ENCODE measurements at regions of chr7 and their contacts with region 1.

Region 1: DNA sequence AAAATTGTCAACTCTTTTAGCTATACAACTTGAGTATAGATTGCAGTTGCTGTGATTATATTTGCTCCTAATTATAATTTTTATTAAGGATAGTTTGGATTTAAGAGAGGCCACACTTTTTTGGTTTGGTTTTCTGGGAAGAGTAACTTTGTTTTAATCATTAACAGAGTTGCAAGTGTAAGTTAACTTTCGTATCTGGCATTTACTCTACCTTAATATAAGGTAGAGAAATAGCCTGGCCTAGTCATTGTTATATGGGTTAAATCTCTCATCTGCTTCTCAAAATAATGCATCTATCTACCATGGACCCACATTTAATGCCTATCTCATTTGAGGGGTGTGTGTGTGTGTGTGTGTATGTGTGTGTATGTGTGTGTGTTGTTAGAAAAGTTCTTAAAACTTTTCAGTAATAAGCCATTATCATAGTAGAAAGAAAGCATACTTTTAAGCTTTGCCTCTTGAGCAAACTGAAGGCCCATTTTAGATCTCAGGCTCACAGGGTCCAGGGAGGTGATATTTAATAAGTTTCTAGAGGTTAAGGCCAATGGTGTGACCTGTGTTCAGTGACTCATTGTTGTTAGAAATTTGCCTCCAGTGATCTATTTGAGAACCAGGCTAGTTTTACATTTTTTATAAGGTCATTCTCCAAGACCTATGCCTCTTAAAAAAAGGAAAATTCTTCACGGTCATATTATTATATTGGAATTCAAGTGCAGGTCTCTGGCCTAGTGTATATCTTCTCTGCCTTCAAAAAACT is 10.9 kb upstream of the TEX47 start:
- DNase-seq: no peak
- H3K4me3 ChIP-seq: no peak overlapping the region
- CTCF ChIP-seq: no peak

Region 2: GRCh38 chr7:88725754-88726153 is 80.7 kb before region 1 on chr7:
- in situ Hi-C with region 1: no loop called
- DNase-seq: no peak
- H3K4me3 ChIP-seq: no peak overlapping the region
- CTCF ChIP-seq: no peak

Region 3: DNA sequence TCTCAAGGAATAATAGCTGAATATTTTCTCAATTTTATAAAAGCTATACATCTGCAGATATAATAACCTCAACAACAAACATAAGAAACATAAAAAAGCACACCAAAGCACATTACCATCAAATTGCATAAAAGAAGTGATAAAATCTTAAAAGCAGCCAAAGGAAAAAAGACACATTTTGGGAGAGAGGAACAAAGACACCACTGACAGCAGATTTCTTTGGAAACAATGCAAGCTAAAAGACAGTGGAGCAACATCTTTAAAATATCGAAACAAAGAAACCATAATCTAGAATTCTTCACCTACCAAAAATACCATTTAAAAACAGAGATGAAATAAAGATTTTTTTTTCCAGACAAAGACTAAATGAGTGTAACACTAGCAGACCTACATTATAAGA is 44.8 kb after region 1 on chr7:
- in situ Hi-C with region 1: loop called (anchors 5 kb)
- DNase-seq: no peak
- H3K4me3 ChIP-seq: no peak overlapping the region
- CTCF ChIP-seq: no peak